A673 (cell line): ENCODE measurements at regions of chr5 and their contacts with region 1.

Region 1: GRCh38 chr5:96868603-96869371 is 7.5 kb upstream of the ERAP2 start:
- DNase-seq: peak; percentile 77
- H3K4me3 ChIP-seq: no peak overlapping the region
- H3K27ac ChIP-seq: no peak overlapping the region
- H3K4me1 ChIP-seq: peaks cover 3% of the 10 kb centered on the region
- H3K27me3 ChIP-seq: no peaks in the 10 kb centered on the region
- CTCF ChIP-seq: peak; percentile 94

Region 2: DNA sequence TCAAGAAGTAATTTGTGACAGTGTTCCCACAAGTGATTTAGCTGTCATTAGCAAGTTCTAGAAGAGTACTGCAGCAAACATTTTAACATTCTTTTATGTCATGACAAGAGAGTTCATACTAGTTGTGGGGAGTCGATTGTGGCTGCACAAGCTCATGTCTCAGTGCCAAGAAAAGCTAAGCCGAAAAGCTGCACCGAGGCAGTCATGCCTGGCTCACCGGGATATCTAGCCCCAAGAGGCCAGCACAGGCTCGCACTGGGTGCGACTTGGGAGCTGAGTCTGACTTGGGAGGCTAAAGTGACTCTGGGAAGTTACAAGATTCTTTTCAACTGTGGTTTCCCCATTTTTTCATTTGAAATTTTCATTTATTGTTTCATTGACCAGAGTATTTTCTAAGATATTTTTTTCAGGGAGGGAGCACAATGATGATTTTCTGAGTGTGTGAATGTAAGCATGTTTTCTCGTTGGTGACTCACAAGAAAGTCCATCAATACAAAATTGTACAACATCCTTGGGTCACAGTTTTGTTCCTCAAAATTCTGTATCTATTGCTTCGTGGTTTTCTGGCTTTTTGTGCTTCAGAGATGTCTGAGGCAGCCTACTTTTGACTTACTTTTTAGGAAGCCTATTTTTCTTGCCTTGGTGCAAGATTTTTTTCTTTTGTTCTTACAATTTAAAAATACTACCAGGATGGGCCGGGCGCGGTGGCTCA is 187.9 kb before region 1 on chr5:
- CTCF ChIA-PET with region 1: interaction called, 12 read pairs
- POLR2A ChIA-PET with region 1: no interaction called
- intact Hi-C with region 1: no loop called
- DNase-seq: no peak
- H3K4me3 ChIP-seq: no peak overlapping the region
- H3K27ac ChIP-seq: no peak overlapping the region
- H3K4me1 ChIP-seq: no peaks in the 10 kb centered on the region
- H3K27me3 ChIP-seq: no peaks in the 10 kb centered on the region
- CTCF ChIP-seq: no peak

Region 3: GRCh38 chr5:96968074-96968473 is 99.3 kb after region 1 on chr5:
- CTCF ChIA-PET with region 1: no interaction called
- POLR2A ChIA-PET with region 1: no interaction called
- intact Hi-C with region 1: no loop called
- DNase-seq: peak; percentile 75
- H3K4me3 ChIP-seq: no peak overlapping the region
- H3K27ac ChIP-seq: peak overlapping the region; percentile 73
- H3K4me1 ChIP-seq: peaks cover 51% of the 10 kb centered on the region
- H3K27me3 ChIP-seq: no peaks in the 10 kb centered on the region
- CTCF ChIP-seq: no peak

Region 4: DNA sequence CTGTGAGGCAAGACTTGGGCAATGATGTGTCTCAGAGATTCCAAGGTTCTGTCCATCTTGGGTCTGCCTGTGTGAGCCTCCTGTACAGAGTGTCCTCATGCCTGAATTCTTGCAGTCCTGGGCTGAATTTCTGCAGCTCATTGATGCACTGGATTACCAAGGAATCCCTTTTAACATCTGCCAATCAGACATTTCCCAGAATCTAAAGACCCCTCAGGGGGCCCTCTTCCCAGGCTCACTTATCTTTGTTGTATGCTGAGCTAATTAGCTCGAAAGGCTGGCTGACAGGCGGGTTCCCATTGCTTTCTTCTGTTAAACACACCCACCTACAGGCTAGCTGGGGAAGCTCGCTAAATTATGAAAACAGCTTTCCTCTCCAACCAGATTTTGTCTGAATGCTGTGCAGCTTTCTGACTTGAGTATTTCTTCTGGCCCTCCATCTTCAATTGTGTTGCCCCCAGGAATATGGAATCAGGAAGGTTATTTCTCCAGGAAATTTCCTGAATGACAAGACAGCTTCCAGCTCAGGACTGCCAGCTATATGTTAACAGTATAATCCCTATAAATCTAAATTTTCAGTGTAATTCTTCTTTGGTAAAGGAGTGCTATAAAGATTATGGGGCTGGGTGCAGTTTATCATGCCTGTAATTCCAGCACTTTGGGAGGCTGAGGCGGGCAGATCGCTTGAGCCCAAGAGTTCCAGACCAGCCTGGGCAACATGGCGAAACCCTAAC is 273.9 kb after region 1 on chr5 and contains the start of gene LIX1:
- CTCF ChIA-PET with region 1: interaction called, 18 read pairs
- POLR2A ChIA-PET with region 1: no interaction called
- intact Hi-C with region 1: loop called (anchors 1 kb)
- DNase-seq: peak; percentile 86
- H3K4me3 ChIP-seq: no peak within 1 kb of the TSS
- H3K27ac ChIP-seq: no peak within 1 kb of the TSS
- H3K4me1 ChIP-seq: no peaks in the 10 kb centered on the region
- H3K27me3 ChIP-seq: no peaks in the 10 kb centered on the region
- CTCF ChIP-seq: peak; percentile 75
- total RNA-seq, gene LIX1: not detected in 2 replicates

Region 5: GRCh38 chr5:97162045-97162444 is 293.3 kb after region 1 on chr5:
- CTCF ChIA-PET with region 1: interaction called, 6 read pairs
- POLR2A ChIA-PET with region 1: no interaction called
- intact Hi-C with region 1: loop called (anchors 1 kb)
- DNase-seq: peak; percentile 82
- H3K4me3 ChIP-seq: no peak overlapping the region
- H3K27ac ChIP-seq: no peak overlapping the region
- H3K4me1 ChIP-seq: no peaks in the 10 kb centered on the region
- H3K27me3 ChIP-seq: no peaks in the 10 kb centered on the region
- CTCF ChIP-seq: peak; percentile 86